Prostate gland (tissue), 2 donors: ENCODE measurements at regions of chr19 and their contacts with region 1.

Region 1: DNA sequence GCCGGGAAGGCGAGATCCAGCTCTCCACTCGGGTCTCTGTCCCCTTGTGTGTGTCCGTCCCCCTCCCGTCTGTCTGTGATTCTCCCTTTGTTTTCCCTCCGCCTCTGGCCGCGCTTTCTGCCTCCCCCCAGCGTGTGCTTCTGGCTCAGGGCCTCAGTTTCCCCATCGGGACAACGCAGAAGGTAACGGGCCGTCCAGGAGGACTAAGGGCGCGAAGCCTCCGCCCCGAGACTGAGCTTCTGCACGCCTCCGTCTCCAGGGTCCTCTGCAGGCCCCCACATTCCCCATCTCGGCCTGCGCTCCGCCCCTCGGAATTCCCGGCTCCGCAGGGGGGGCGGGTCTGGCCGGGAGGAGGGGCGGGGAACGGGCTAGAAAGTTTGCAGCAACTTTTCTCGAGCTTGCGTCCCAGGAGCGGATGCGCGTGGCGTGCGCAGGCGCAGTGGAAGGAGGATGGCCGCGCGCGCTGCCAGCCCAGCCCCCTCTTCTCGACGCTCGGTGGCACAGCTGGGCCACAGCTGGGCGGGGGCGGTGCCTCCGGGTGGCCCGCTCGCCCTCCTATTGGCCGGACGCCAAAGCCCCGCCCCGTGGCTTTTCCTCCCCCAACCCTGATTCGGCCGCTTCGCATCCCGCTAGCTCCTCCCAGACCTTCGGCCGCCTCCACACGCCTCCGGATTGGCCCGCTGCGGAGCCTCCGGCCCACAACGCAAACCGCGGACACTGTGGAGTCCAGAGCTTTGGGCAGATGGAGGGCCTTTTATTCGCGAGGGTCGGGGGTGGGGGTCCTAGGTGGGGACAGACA is at the start of gene SIX5:
- DNase-seq: peak; percentile 97
- H3K4me3 ChIP-seq: peak within 1 kb of the TSS; percentile 79 to 83
- H3K27ac ChIP-seq: peak within 1 kb of the TSS; percentile 97 to 99
- H3K4me1 ChIP-seq: peaks cover 28% of the 10 kb centered on the region
- H3K27me3 ChIP-seq: no peaks in the 10 kb centered on the region
- CTCF ChIP-seq: peak in 1 of 4 experiments; percentile 13
- POLR2A ChIP-seq: peak; percentile 85
- total RNA-seq, gene SIX5: 33.7 to 37.5 TPM

Region 2: DNA sequence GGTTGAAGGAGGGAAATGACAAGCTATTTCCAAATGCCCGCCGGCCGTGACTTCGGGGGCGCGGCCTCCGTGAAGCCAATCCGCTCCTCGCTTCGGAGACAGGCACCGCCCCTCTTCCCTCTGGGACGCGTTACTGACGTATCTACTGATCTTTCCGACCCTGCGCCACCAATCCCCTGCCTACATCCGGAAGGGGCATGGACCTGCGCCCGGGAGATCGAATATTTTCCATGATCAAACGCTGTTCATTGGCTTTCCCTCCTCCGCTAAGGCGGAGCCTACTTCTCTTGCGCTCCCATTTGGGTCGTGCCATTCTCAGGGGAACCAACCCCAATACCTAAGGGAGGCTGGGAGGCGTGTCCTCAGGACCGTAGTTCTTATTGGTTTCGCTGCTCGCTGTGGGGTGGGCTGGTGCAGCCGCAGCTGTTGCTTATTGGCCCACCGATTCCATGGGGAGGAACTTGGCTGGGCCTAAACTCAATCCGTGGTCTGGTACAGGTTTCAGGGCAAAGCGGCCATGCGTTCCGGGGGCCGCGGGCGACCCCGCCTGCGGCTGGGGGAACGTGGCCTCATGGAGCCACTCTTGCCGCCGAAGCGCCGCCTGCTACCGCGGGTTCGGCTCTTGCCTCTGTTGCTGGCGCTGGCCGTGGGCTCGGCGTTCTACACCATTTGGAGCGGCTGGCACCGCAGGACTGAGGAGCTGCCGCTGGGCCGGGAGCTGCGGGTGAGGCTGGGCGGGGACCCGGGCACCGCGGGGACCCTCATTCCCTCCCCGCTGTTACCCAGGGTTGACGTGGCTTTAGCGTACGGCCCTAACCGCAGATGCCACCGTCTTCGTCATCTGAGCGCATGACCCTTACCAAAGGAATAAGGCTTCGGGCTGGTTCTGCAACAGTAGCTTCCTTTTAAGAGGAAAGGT is 76.7 kb before region 1 on chr19 and contains the start of gene QPCTL:
- intact Hi-C with region 1: loop called (anchors 5 kb)
- DNase-seq: peak; percentile 99
- H3K4me3 ChIP-seq: peak within 1 kb of the TSS; percentile 71 to 75
- H3K27ac ChIP-seq: peak within 1 kb of the TSS; percentile 93 to 96
- H3K4me1 ChIP-seq: peaks cover 3% of the 10 kb centered on the region
- H3K27me3 ChIP-seq: no peaks in the 10 kb centered on the region
- CTCF ChIP-seq: peak in 1 of 4 experiments; percentile 15
- POLR2A ChIP-seq: peak; percentile 75
- total RNA-seq, gene QPCTL: 5.2 to 18.4 TPM

Region 3: GRCh38 chr19:45809643-45810159 is 40.5 kb after region 1 on chr19:
- intact Hi-C with region 1: no loop called
- DNase-seq: no peak
- H3K4me3 ChIP-seq: no peak overlapping the region
- H3K27ac ChIP-seq: no peak overlapping the region
- H3K4me1 ChIP-seq: no peaks in the 10 kb centered on the region
- H3K27me3 ChIP-seq: no peaks in the 10 kb centered on the region
- CTCF ChIP-seq: no peak
- POLR2A ChIP-seq: no peak